ENCODE measurements at regions of chr12 and their contacts with region 1.

Region 1: GRCh38 chr12:122834104-122834920 is 945 bp upstream of the HIP1R start:
- DNase-seq: no peak
- ATAC-seq: peak; percentile 36 to 72 (median 60)
- H3K4me3 ChIP-seq: peak overlapping the region; percentile 77
- H3K27ac ChIP-seq: no peak overlapping the region
- H3K4me1 ChIP-seq: peaks cover 9% of the 10 kb centered on the region
- H3K27me3 ChIP-seq: no peaks in the 10 kb centered on the region
- CTCF ChIP-seq: no peak

Region 2: DNA sequence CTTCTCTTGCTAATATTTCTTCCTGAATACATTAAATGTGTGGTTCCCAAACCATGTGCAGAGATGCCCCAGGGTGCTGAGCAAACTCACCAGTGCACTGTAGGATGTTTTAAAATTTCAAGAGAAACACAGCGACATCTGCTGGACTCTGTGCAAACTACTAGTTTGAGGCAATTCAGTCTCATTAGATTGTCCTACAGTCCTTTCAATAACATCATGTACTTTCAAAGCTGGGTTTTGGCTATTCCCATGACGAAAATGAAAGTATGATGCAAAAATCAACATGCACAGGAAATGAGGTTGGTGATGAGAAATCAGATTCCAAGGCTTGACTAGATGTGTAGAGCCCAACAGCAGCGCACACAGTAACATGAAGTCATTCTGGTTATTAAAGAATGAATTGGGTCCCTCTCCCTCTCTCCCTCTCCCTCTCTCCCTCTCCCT is 478.1 kb before region 1 on chr12:
- intact Hi-C with region 1: no loop called
- DNase-seq: no peak
- ATAC-seq: peak; percentile 63 to 77 (median 72)
- H3K4me3 ChIP-seq: no peak overlapping the region
- H3K27ac ChIP-seq: peak overlapping the region; percentile 71
- H3K4me1 ChIP-seq: peaks cover 9% of the 10 kb centered on the region
- H3K27me3 ChIP-seq: no peaks in the 10 kb centered on the region
- CTCF ChIP-seq: peak; percentile 72

Region 3: DNA sequence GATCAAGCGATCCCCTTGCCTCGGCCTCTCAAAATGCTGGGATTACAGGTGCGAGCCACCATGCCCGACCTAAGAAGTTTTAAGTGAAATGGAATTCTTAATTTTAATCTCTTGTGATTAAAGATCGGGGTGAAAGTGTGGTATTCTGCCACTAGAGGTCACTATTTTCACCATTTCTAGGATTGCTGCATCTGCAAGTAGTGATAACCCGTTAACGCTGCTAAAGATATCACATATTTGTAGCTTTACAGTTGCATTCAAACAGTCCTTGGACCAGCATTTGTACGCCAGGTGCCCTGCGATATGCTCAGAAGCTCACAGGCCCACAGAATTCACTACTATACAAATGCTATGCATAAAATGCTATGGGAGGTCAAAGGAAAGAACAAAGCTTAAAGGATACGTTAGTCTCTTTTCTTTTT is 40.6 kb before region 1 on chr12:
- intact Hi-C with region 1: loop called in 1 of 2 experiments (anchors 5 kb)
- DNase-seq: no peak
- ATAC-seq: peak in 3 of 4 donors; percentile 35 to 77 (median 55)
- H3K4me3 ChIP-seq: no peak overlapping the region
- H3K27ac ChIP-seq: no peak overlapping the region
- H3K4me1 ChIP-seq: no peaks in the 10 kb centered on the region
- H3K27me3 ChIP-seq: no peaks in the 10 kb centered on the region
- CTCF ChIP-seq: peak; percentile 72